Activated CD4-positive, alpha-beta T cell treated with anti-CD3 and anti-CD28 coated beads, Interleukin-2, amount 10 ng/mL, durations not matched to agents 24 days and 14 days (primary cell): ENCODE measurements at regions of chr11 and their contacts with region 1.

Region 1: GRCh38 chr11:62108017-62108750 is 15.6 kb upstream of the INCENP start:
- DNase-seq: peak; percentile 83
- H3K4me3 Mint-ChIP-seq: no peak overlapping the region
- H3K27ac Mint-ChIP-seq: no peak overlapping the region
- H3K4me1 Mint-ChIP-seq: peaks cover 18% of the 10 kb centered on the region
- H3K27me3 Mint-ChIP-seq: peaks cover 7% of the 10 kb centered on the region

Region 2: GRCh38 chr11:61747192-61747966 is 360.8 kb before region 1 on chr11:
- intact Hi-C with region 1: loop called (anchors 5 kb)
- DNase-seq: peak; percentile 88
- H3K4me3 Mint-ChIP-seq: no peak overlapping the region
- H3K27ac Mint-ChIP-seq: no peak overlapping the region
- H3K4me1 Mint-ChIP-seq: peaks cover 3% of the 10 kb centered on the region
- H3K27me3 Mint-ChIP-seq: peaks cover 13% of the 10 kb centered on the region

Region 3: GRCh38 chr11:61871158-61871597 is 237.0 kb before region 1 on chr11:
- intact Hi-C with region 1: loop called (anchors 1 kb)
- DNase-seq: peak; percentile 92
- H3K4me3 Mint-ChIP-seq: peak overlapping the region; percentile 68
- H3K27ac Mint-ChIP-seq: peak overlapping the region; percentile 10
- H3K4me1 Mint-ChIP-seq: peaks cover 7% of the 10 kb centered on the region
- H3K27me3 Mint-ChIP-seq: no peaks in the 10 kb centered on the region

Region 4: GRCh38 chr11:61899146-61899841 is 208.9 kb before region 1 on chr11:
- intact Hi-C with region 1: loop called (anchors 1 kb)
- DNase-seq: peak; percentile 98
- H3K4me3 Mint-ChIP-seq: no peak overlapping the region
- H3K27ac Mint-ChIP-seq: peak overlapping the region; percentile 30
- H3K4me1 Mint-ChIP-seq: peaks cover 4% of the 10 kb centered on the region
- H3K27me3 Mint-ChIP-seq: peaks cover 3% of the 10 kb centered on the region

Region 5: DNA sequence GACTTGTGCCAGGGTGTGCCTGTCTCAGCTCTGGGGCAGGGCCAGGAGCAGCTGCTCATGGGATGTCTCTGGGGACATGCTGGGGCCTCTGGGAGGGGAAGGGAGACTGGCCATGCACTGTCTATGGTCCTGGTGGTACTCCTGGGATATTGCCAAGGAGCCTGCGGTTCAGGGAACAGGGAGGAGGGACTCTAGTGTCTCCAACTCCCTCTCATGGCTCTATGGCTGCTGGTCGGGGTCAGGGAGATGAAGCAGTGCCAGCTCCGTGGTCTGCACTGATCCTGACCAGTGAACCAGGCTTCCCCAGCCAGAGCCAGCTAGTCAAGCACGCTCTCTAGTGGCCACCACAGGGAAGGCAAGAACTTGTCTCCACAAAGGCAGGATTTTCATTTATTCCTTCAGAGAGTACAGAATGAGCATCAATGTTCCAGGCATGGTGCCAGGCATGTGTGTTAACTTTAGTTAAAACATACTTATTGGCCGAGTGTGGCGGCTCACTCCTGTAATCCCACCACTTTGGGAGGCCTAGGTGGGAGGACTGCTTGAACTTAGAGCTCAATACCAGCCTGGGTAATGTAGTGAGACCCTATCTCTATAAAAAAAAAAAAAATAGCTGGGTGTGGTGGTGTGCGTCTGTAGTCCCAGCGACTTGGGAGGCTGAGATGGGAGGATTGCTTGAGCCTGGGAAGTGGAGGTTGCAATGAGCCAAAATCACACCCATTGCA is 160.5 kb before region 1 on chr11:
- intact Hi-C with region 1: loop called (anchors 5 kb)
- DNase-seq: peak; percentile 91
- H3K4me3 Mint-ChIP-seq: no peak overlapping the region
- H3K27ac Mint-ChIP-seq: no peak overlapping the region
- H3K4me1 Mint-ChIP-seq: peaks cover 2% of the 10 kb centered on the region
- H3K27me3 Mint-ChIP-seq: peaks cover 8% of the 10 kb centered on the region

Region 6: GRCh38 chr11:62245271-62245753 is 137.1 kb after region 1 on chr11:
- intact Hi-C with region 1: no loop called
- DNase-seq: no peak
- H3K4me3 Mint-ChIP-seq: no peak overlapping the region
- H3K27ac Mint-ChIP-seq: no peak overlapping the region
- H3K4me1 Mint-ChIP-seq: no peaks in the 10 kb centered on the region
- H3K27me3 Mint-ChIP-seq: peaks cover 11% of the 10 kb centered on the region